Dendritic cell treated with granulocyte-macrophage colony-stimulating factor and Interleukin-4, amounts not matched to agents 40 ng/mL and 50 ng/mL, for 4 days (primary cell): ENCODE measurements at regions of chr19 and their contacts with region 1.

Region 1: GRCh38 chr19:6103217-6103644 is 7.1 kb downstream of the RFX2 start:
- H3K4me3 Mint-ChIP-seq: no peak overlapping the region
- H3K27ac Mint-ChIP-seq: peak overlapping the region; percentile 20
- H3K4me1 Mint-ChIP-seq: peaks cover 43% of the 10 kb centered on the region
- H3K27me3 Mint-ChIP-seq: no peaks in the 10 kb centered on the region

Region 2: DNA sequence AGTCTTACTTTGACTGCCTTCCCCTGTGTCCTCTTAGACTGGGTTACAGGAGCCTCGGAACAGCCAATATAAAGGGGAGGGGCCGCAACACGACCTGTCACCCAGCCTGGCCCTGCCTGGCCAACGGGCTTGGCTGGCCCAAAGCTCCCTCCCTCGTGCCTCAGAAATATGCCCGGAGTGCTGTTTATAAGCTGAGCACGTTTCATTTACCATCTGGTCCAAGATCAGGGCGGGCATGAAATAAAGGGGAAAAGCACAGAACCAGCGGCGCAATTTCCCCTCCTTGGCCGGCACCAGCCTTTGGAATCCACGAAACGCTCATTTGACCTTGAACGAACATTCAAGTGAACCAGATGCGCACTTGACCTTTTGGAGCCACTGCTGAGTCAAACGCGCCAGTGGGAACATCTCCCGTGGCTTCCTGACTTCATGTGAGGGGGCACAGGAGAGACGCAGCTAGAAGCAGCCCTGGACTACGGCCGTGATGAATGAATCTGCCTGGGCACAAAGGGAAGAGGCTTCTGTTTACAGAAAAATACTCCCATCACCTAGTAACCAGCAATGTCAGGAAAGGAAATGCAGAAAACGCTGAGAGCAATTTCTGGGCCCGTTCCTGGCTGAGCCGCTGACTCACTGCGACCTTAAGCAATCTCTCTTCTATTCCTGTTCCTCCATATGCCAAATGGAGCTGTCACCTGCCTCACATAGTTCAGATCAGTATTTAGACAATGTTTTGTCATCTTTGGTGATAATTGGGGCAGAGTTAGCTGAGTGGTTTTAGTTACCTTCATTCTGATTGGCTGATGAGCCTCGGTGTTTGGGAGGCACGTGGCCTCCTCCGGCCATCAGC is 46.2 kb before region 1 on chr19:
- intact Hi-C with region 1: loop called (anchors 5 kb)
- H3K4me3 Mint-ChIP-seq: peak overlapping the region; percentile 22
- H3K27ac Mint-ChIP-seq: peak overlapping the region; percentile 92
- H3K4me1 Mint-ChIP-seq: peaks cover 66% of the 10 kb centered on the region
- H3K27me3 Mint-ChIP-seq: no peaks in the 10 kb centered on the region